Tibial artery (tissue), 4 donors: ENCODE measurements at regions of chr16 and their contacts with region 1.

Region 1: DNA sequence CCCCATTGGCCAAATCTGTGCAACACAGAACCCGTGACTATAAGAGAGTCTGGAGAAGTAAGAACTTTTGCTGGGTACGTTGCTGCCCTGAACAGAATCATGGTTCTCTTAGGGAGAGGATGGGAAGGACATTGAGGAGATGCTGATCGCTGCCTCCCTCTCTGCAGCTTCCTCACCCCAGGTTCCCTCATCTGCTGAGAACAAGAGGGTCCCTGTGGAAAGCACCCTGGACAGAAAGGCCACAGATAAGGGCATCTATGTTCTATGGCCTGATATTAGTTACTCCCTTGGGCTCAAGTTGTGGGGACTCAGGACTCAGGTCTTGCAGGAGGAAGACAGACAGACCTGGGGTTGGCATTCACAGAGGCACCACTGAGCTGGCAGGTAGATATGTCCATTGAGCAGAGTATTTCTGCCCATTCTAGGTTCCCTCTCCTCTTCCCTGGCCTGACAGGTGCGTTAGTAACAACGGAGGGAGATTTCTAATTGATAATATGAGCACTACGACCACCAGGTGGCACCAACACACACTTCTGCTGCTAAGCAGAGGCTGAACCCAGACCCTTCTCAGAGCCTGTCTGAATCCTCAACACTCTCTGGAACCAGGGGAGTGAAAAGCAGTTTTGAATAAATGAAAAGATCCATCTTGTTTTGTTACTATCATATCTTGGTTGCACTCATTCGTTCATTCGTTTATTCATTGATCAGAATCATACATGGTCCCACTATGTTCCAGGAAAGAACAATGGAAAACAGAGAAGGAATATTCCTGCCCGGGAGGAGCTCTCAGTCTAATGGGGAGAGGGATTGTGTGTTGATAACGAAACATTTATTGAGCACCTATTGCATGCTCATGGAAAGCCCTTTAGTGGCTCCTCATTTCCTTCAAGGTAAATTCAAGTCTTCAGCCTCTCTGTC is 56.4 kb downstream of the SLC6A2 start:
- DNase-seq: peak; percentile 57 to 75
- H3K4me3 ChIP-seq: no peak overlapping the region
- H3K27ac ChIP-seq: no peak overlapping the region
- H3K4me1 ChIP-seq: no peaks in the 10 kb centered on the region
- H3K27me3 ChIP-seq: peaks cover 0 to 39% of the 10 kb centered on the region in 2 donors
- CTCF ChIP-seq: peak; percentile 62 to 63

Region 2: GRCh38 chr16:55842369-55843104 is 130.3 kb after region 1 on chr16:
- intact Hi-C with region 1: loop called (anchors 5 kb)
- DNase-seq: no peak
- H3K4me3 ChIP-seq: no peak overlapping the region
- H3K27ac ChIP-seq: no peak overlapping the region
- H3K4me1 ChIP-seq: no peaks in the 10 kb centered on the region
- H3K27me3 ChIP-seq: peaks cover 0 to 24% of the 10 kb centered on the region in 2 donors
- CTCF ChIP-seq: peak; percentile 69 to 75